ENCODE measurements at regions of chr3 and their contacts with region 1.

Region 1: GRCh38 chr3:149527531-149528339 is 53.2 kb downstream of the TM4SF4 start:
- DNase-seq: peak in 1 of 4 donors; percentile 51
- ATAC-seq: peak; percentile 92
- H3K4me3 ChIP-seq: no peak overlapping the region
- H3K27ac ChIP-seq: peak overlapping the region; percentile 68 to 83
- H3K4me1 ChIP-seq: peaks cover 8 to 20% of the 10 kb centered on the region in 2 donors
- H3K27me3 ChIP-seq: no peaks in the 10 kb centered on the region
- CTCF ChIP-seq: no peak

Region 2: GRCh38 chr3:149199474-149199873 is 328.3 kb before region 1 on chr3:
- intact Hi-C with region 1: no loop called
- DNase-seq: peak in 1 of 4 donors; percentile 20
- ATAC-seq: no peak
- H3K4me3 ChIP-seq: no peak overlapping the region
- H3K27ac ChIP-seq: no peak overlapping the region
- H3K4me1 ChIP-seq: peaks cover 3 to 10% of the 10 kb centered on the region in 2 donors
- H3K27me3 ChIP-seq: no peaks in the 10 kb centered on the region
- CTCF ChIP-seq: no peak

Region 3: GRCh38 chr3:149657926-149658733 is 130.4 kb after region 1 on chr3 and contains the start of gene WWTR1:
- intact Hi-C with region 1: loop called in 1 of 2 experiments (anchors 5 kb)
- DNase-seq: peak; percentile 90 to 95 (median 93)
- ATAC-seq: peak; percentile 89
- H3K4me3 ChIP-seq: peak within 1 kb of the TSS; percentile 61 to 64
- H3K27ac ChIP-seq: peak within 1 kb of the TSS; percentile 92 to 99
- H3K4me1 ChIP-seq: peaks cover 13 to 35% of the 10 kb centered on the region in 2 donors
- H3K27me3 ChIP-seq: peaks cover 0 to 87% of the 10 kb centered on the region in 2 donors
- CTCF ChIP-seq: no peak
- polyA plus RNA-seq, gene WWTR1: 103 to 124 (median 110) TPM

Region 4: GRCh38 chr3:149717391-149718056 is 189.8 kb after region 1 on chr3:
- intact Hi-C with region 1: loop called in 1 of 2 experiments (anchors 10 kb)
- DNase-seq: peak in 2 of 4 donors; percentile 63 to 76
- ATAC-seq: peak; percentile 88
- H3K4me3 ChIP-seq: no peak overlapping the region
- H3K27ac ChIP-seq: no peak overlapping the region
- H3K4me1 ChIP-seq: peaks cover 0 to 6% of the 10 kb centered on the region in 2 donors
- H3K27me3 ChIP-seq: no peaks in the 10 kb centered on the region
- CTCF ChIP-seq: peak; percentile 59 to 62

Region 5: DNA sequence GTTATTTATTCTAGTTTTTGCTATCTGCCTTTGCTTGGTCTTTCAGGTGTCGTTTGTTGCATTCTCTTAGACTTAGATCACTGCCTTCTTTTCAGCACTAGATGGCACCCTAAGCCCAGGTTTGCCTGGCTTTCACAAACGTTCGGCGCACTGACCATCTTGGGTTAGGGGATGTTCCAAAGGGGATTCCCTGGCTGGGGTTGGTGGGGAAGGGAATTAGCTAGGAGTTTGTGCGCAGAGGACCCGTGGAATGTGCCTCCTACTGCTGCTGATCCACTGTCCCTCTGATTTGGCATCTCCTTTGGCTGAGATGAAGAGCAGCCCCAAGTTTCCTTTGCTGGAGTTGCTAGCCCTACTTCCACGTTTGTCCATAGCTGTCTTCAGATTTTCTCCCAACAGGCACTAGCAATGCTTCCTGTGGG is 409.1 kb after region 1 on chr3:
- intact Hi-C with region 1: no loop called
- DNase-seq: peak in 2 of 4 donors; percentile 11 to 36
- ATAC-seq: peak; percentile 83
- H3K4me3 ChIP-seq: no peak overlapping the region
- H3K27ac ChIP-seq: no peak overlapping the region
- H3K4me1 ChIP-seq: peaks cover 4 to 12% of the 10 kb centered on the region in 2 donors
- H3K27me3 ChIP-seq: no peaks in the 10 kb centered on the region
- CTCF ChIP-seq: peak; percentile 51 to 55

Measured in left lung (tissue), 14 donors.